Aorta (tissue), 5 donors: ENCODE measurements at regions of chr21 and their contacts with region 1.

Region 1: GRCh38 chr21:44932408-44933181 is 7.2 kb upstream of the SLX9 start:
- DNase-seq: peak; percentile 71 to 87
- ATAC-seq: peak; percentile 34
- H3K4me3 ChIP-seq: peak overlapping the region; percentile 3 to 31
- H3K27ac ChIP-seq: no peak overlapping the region
- H3K4me1 ChIP-seq: no peaks in the 10 kb centered on the region
- H3K27me3 ChIP-seq: no peaks in the 10 kb centered on the region

Region 2: DNA sequence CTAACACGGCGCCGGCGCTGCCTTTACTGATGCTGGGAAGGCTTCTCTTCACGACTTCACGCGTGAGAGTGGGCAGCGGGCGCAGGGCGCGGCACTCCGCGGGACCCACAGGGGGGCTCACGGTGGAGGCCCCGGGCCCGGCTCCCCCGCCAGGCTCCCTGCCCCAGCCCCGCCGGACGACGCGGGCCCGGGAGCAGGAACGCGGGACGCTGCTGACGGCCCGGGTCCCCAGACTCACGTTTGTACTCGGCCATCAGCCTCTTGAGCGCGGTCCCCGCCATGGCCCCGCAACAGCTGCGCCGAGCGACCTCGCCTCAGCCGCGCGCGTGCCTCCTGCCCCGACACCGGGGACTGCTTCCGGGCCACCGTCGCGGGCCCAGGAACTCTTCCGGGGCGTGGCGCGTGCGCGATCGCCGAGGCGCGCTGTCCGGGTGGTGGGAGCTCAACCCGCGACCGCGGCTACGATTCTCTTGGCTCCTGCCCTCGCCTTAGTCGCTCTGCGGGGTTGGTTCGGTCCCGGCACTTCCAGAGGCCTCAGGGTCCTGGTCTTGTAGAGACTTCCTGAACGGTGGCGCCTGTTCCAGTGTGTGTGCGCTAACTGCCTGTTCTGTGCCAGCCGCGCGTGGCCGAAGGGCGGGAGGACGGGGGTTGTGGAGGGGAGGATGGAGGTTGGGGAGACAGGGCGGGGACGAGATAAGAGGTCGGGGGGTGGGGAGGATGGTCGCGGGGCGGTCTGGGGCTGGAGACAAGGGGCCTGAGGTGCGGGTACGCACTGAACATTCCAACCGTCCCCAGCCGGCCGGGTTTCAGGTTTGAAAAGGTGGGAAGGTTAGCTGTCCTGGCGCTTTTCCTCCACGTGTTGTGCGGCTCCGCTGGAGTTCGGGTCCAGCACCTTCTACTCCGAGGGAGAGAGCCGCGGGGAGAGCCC is 130.9 kb before region 1 on chr21 and contains the start of gene UBE2G2:
- intact Hi-C with region 1: loop called in 1 of 2 experiments (anchors 5 kb)
- DNase-seq: peak; percentile 85 to 95
- ATAC-seq: peak; percentile 94
- H3K4me3 ChIP-seq: peak within 1 kb of the TSS; percentile 80 to 99
- H3K27ac ChIP-seq: peak within 1 kb of the TSS in 1 of 2 donors; percentile 37
- H3K4me1 ChIP-seq: no peaks in the 10 kb centered on the region
- H3K27me3 ChIP-seq: no peaks in the 10 kb centered on the region
- total RNA-seq, gene UBE2G2: 79.5 to 83.6 TPM

Region 3: DNA sequence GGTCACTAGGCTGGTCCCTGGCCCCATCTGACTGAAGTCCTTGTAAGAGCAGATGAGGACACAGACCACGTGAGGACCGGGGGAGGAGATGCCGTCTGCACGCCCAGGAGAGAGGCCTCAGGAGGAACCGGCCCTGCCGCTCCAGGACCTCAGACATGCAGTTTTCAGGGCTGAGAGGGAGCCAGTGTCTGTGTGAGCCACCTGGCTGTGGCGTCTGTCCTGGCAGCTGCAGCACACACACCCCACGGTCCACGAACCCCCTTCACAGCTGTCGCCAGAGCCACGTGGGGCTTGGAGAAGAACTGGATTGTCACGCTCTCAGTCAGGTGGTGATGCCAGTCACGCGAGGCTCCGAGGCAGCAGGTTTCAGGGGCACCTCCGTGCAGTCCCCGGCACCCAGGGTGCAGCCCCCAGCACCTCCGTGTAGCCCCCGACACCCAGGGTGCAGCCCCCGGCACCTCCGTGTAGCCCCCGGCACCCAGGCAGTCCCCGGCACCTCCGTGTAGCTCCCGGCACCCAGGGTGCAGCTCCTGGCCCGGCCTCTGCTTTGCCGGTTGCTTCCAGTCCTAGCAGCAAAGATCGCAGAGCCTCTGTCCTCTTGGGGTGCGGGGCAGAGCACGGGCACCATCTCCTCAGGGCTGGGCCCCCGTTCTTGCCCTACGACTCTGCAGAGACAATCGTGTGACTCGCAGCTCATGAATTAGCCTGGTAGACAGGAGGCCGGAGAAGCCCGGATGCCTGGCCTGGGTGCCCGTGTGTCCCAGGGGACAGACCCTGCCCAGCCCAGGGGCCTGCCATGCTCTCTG is 95.7 kb before region 1 on chr21:
- intact Hi-C with region 1: no loop called
- DNase-seq: no peak
- ATAC-seq: no peak
- H3K4me3 ChIP-seq: no peak overlapping the region
- H3K27ac ChIP-seq: no peak overlapping the region
- H3K4me1 ChIP-seq: no peaks in the 10 kb centered on the region
- H3K27me3 ChIP-seq: no peaks in the 10 kb centered on the region

Region 4: GRCh38 chr21:44892536-44893277 is 39.9 kb before region 1 on chr21:
- intact Hi-C with region 1: loop called (anchors 2 to 5 kb)
- DNase-seq: peak; percentile 81 to 92
- ATAC-seq: no peak
- H3K4me3 ChIP-seq: no peak overlapping the region
- H3K27ac ChIP-seq: no peak overlapping the region
- H3K4me1 ChIP-seq: no peaks in the 10 kb centered on the region
- H3K27me3 ChIP-seq: no peaks in the 10 kb centered on the region